ENCODE measurements at regions of chr15 and their contacts with region 1.

Region 1: GRCh38 chr15:99755692-99756409 is 22.6 kb upstream of the LYSMD4 start:
- DNase-seq: peak; percentile 26 to 51
- H3K4me3 ChIP-seq: no peak overlapping the region
- H3K27ac ChIP-seq: no peak overlapping the region
- H3K4me1 ChIP-seq: no peaks in the 10 kb centered on the region
- H3K27me3 ChIP-seq: no peaks in the 10 kb centered on the region
- CTCF ChIP-seq: peak; percentile 72 to 89 (median 76)
- POLR2A ChIP-seq: no peak

Region 2: GRCh38 chr15:99282121-99282520 is 473.7 kb before region 1 on chr15:
- intact Hi-C with region 1: loop called (anchors 10 kb)
- DNase-seq: no peak
- H3K4me3 ChIP-seq: no peak overlapping the region
- H3K27ac ChIP-seq: no peak overlapping the region
- H3K4me1 ChIP-seq: no peaks in the 10 kb centered on the region
- H3K27me3 ChIP-seq: no peaks in the 10 kb centered on the region
- CTCF ChIP-seq: no peak
- POLR2A ChIP-seq: no peak

Measured in uterus (tissue), 4 donors.